ENCODE measurements at regions of chr1 and their contacts with region 1.

Region 1: GRCh38 chr1:174999216-174999925 is 376 bp upstream of the CACYBP start:
- DNase-seq: peak; percentile 97
- H3K4me3 Mint-ChIP-seq: no peak overlapping the region
- H3K27ac Mint-ChIP-seq: no peak overlapping the region
- H3K4me1 Mint-ChIP-seq: peaks cover 42% of the 10 kb centered on the region
- H3K27me3 Mint-ChIP-seq: no peaks in the 10 kb centered on the region

Region 2: DNA sequence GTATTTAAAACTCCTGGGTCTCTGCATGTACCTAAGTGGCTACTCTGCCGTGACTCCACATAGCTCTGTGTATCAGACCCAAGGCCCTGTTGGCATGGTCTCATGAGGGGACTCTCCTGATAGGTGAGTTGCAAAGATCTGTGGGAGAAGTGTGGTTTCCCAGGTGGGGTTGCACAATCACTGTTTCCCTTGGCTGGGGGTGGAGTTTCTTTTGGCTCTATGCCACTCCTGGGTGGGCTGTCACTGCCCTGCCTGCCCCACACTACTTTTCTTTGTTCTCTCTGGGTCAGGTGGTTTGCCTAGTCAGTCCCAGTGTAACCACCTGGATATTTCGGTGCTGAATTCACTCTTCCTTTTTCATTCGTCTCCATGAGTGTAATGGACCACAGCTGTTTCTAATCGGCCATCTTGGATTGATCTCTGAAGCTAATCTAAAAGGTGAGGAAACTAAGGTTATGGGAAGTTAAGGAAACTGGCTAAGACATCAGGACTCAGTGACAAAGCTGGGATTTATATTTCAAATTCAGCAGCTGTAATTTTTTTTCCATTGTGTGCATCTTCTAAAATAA is 96.8 kb before region 1 on chr1:
- CTCF ChIA-PET with region 1: no interaction called
- POLR2A ChIA-PET with region 1: no interaction called
- DNase-seq: no peak
- H3K4me3 Mint-ChIP-seq: no peak overlapping the region
- H3K27ac Mint-ChIP-seq: no peak overlapping the region
- H3K4me1 Mint-ChIP-seq: no peaks in the 10 kb centered on the region
- H3K27me3 Mint-ChIP-seq: no peaks in the 10 kb centered on the region

Region 3: DNA sequence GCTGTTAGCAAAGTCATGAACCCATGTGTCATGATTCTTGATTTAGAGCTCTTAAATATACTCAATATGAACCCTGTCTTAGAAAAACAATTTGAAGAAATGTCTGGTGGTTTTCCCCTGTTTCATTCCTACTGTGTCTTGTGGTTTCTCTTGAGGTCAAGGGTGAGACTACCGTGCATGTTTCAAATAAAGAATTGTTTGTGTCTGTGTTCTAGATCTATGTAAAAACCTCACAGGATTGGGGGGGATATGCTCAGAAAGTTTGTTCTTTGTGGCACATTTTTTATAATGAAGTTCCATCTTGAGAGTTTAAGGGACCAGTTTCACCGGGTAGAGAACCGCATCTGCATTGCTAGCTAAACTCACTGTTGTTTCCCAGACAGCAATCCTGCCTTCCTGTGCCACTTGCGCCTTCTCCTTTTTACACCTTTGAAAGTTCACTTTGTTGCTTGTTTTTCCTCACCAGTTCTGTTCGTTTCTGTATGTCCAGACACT is 30.6 kb before region 1 on chr1:
- CTCF ChIA-PET with region 1: interaction called, 5 read pairs
- POLR2A ChIA-PET with region 1: interaction called, 10 read pairs
- DNase-seq: peak; percentile 66
- H3K4me3 Mint-ChIP-seq: peak overlapping the region; percentile 63
- H3K27ac Mint-ChIP-seq: peak overlapping the region; percentile 96
- H3K4me1 Mint-ChIP-seq: peaks cover 79% of the 10 kb centered on the region
- H3K27me3 Mint-ChIP-seq: no peaks in the 10 kb centered on the region

Region 4: DNA sequence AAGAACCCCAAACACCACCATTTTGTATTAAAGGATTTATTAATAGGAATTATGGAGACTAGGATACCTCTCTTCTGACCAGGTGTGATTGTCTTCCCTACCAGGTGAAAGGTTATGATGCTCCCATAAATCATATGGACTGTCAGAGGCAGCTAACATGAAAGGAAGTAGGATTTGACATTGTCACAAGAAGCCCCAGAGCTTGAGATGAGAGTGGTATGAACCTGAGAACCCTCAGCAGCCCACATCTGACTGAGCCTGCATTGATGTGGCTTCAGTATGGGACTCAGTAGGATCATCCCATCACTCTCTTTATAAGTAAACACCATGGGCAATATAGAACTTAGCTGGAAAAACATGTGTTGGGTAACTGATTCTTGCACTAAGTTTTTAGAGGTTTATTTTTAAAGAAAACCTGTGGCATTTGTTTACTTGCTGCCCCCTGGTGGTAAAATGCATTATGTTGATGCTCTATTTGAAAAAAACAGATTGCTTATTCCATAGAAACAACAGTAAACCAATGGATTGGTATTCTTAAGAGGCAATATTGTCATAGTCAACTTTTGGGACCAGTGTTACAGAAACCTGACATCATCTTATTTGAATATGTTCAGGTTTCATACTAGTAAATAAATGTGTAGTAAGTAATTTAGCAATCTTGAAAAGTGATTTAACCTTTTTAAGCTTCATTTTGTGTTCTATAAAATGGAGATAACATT is 16.2 kb before region 1 on chr1:
- CTCF ChIA-PET with region 1: interaction called, 13 read pairs
- POLR2A ChIA-PET with region 1: no interaction called
- DNase-seq: peak; percentile 76
- H3K4me3 Mint-ChIP-seq: no peak overlapping the region
- H3K27ac Mint-ChIP-seq: no peak overlapping the region
- H3K4me1 Mint-ChIP-seq: peaks cover 25% of the 10 kb centered on the region
- H3K27me3 Mint-ChIP-seq: no peaks in the 10 kb centered on the region

Region 5: DNA sequence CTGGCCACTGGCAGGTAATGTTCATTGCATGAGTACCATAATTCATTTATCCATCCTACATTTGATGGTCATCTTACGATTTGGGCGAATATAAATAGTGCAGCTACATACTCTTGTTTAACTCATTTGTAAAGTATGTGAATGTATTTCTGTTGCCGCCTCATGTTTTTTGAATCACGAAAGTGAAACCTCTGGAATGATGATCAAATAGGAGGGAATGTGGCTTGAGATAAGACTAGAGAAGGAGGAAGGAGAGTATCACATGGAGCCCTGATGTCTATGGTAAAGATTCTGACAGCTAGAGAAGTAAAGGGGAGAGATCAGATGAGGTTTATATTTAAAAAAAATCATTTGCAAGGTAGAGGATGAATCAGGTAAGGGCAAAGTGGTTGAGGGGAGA is 15.9 kb after region 1 on chr1:
- CTCF ChIA-PET with region 1: interaction called, 13 read pairs
- POLR2A ChIA-PET with region 1: interaction called, 3 read pairs
- DNase-seq: no peak
- H3K4me3 Mint-ChIP-seq: no peak overlapping the region
- H3K27ac Mint-ChIP-seq: no peak overlapping the region
- H3K4me1 Mint-ChIP-seq: peaks cover 11% of the 10 kb centered on the region
- H3K27me3 Mint-ChIP-seq: no peaks in the 10 kb centered on the region

Region 6: DNA sequence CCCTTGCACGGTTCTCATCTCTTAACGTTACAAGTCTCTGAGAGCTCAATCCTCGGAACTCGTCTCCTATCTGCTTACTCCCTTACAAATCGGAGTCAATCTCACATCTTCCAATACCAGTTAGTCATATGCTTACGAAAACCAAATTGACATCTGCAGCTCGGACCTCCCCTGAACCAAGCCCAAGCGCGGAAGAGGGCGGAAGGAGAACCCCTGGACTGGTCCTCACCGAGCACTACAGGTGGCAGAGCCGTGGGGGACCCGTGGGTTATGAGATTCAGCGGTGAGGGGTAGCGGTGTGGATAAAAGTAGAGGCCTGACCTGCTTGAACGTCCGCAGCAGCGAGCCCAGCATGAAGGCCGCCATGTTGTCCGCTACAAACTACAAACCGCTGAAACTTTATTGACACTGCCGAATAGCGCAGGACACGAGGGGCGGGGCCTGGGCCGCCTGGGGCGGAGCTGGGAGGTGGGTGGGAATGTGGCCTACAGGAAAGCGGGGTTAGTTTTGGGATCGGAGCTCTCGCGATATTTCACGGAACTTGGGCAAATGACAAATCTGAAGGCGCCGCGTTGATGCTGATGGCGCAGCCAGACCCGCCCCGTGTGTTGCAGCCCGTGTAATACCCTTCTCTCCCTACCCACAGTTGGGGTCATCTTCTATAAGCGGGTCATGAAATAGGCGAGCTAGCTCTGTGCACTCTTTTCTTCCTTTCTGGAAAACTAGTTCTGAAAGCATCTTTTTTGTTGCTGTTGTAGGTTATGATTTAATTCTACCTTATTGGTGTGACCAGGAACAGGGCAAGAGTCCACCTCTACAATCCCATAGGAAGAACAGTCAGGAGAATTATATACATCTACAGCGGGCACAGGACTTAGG is 23.9 kb after region 1 on chr1 and contains the start of gene MRPS14:
- CTCF ChIA-PET with region 1: interaction called, 11 read pairs
- POLR2A ChIA-PET with region 1: interaction called, 8 read pairs
- DNase-seq: peak; percentile 99
- H3K4me3 Mint-ChIP-seq: peak within 1 kb of the TSS; percentile 89
- H3K27ac Mint-ChIP-seq: peak within 1 kb of the TSS; percentile 92
- H3K4me1 Mint-ChIP-seq: peaks cover 31% of the 10 kb centered on the region
- H3K27me3 Mint-ChIP-seq: no peaks in the 10 kb centered on the region
- total RNA-seq, gene MRPS14: 34.5 to 34.6 TPM